HCT116 (cell line): ENCODE measurements at regions of chr13 and their contacts with region 1.

Region 1: DNA sequence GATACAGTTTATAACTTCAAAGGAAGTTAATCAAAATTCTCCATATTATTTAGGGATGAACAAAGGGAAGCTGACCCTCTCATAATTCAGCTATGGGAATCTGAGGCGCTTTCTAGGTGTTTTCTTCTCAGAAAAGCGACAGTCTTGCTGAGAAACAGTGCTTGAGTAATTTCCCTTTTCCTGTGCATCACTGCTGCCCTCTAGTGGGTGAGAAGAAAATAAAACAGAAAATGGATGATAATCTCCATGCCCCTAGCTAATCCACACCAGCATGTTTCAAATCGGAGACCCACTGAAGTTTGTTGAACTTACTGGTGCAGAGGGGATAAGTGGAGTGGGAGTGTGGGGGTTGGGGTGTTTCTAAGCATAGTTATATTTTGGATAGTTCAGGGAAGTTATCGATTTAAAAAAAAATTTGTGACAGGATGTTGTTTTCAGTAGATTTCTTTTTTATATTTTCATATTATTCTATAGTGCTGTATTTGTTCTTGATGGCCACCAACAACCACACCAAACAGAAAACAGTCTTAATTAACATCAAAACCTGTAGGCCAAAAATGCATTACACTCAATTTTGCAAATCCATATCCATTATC is 21.4 kb downstream of the LCP1 start:
- DNase-seq: peak; percentile 48
- ATAC-seq: peak; percentile 85
- H3K4me3 ChIP-seq: no peak overlapping the region
- H3K27ac ChIP-seq: no peak overlapping the region
- H3K4me1 ChIP-seq: no peaks in the 10 kb centered on the region
- H3K27me3 ChIP-seq: no peaks in the 10 kb centered on the region
- CTCF ChIP-seq: peak; percentile 61 to 82 (median 75)
- POLR2A ChIP-seq: no peak
- RAD21 ChIP-seq: peak; percentile 77

Region 2: DNA sequence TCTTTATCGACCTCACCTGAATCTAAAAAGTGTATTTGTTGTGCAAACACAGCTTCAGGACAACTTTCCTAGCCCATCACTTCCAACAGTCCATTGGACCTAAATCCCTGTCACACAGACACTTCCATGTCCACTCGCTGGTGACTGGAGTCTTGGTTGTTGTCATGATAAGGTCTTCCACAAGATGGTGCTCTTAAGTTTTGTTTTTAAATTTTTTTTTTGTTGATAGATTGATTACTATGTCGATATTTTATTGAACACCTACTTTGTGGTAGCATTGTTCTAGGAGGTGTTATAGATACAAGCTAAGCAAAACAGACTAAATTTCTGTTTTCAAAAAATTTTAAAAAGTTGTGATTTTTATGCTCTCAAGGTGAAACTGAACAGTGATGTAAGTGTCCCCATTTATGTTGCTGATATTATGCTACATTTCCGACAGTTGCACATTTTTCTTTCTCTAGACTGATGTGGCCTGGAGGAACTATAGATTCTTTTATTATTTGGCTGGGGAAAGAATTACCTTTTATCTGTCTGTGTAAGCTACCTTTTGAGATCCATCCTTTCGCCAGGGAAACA is 537.0 kb before region 1 on chr13:
- CTCF ChIA-PET with region 1: interaction called, 4 read pairs
- POLR2A ChIA-PET with region 1: no interaction called
- RAD21 ChIA-PET with region 1: no interaction called
- intact Hi-C with region 1: loop called (anchors 1 kb)
- DNase-seq: peak; percentile 33
- ATAC-seq: peak; percentile 76; the same call in 1 of the 2 replicates
- H3K4me3 ChIP-seq: no peak overlapping the region
- H3K27ac ChIP-seq: no peak overlapping the region
- H3K4me1 ChIP-seq: no peaks in the 10 kb centered on the region
- H3K27me3 ChIP-seq: peaks cover 90% of the 10 kb centered on the region
- CTCF ChIP-seq: peak; percentile 36 to 62 (median 44); a peak in 4 of 6 replicates
- POLR2A ChIP-seq: no peak
- RAD21 ChIP-seq: peak; percentile 58

Region 3: DNA sequence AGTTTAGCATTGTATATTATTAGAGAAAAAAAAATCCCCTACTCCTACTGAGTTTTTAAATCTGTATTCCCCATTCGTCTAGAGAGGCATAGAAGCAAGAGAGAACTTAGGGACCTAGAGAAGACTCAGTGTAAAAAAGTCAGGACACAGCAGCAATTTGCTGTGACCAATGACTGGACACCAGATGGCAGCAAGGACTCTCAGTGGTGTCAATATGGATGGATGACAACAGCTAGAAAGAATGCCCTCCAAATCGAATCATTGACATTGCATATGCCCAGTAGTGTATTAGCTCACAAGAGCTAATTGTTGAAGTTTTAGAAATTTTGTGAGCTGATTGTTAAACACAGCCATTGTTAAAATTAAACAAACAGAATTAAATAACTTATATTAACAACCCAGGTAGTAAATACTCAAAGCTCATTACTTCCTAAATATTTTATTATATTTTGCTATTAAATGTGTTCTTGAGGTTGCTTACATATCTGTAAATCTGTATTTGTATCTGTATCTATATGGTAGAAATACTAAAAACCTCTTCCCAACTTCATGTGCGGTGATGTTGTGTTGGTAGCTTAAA is 353.0 kb before region 1 on chr13:
- CTCF ChIA-PET with region 1: interaction called, 37 read pairs
- POLR2A ChIA-PET with region 1: interaction called, 5 read pairs
- RAD21 ChIA-PET with region 1: interaction called in 1 of 2 experiments, 3 read pairs
- intact Hi-C with region 1: loop called (anchors 2 kb)
- DNase-seq: peak; percentile 62
- ATAC-seq: peak; percentile 99
- H3K4me3 ChIP-seq: no peak overlapping the region
- H3K27ac ChIP-seq: no peak overlapping the region
- H3K4me1 ChIP-seq: no peaks in the 10 kb centered on the region
- H3K27me3 ChIP-seq: no peaks in the 10 kb centered on the region
- CTCF ChIP-seq: peak; percentile 66 to 77 (median 70)
- POLR2A ChIP-seq: no peak
- RAD21 ChIP-seq: peak; percentile 85

Region 4: GRCh38 chr13:46146899-46147298 is 13.7 kb before region 1 on chr13:
- CTCF ChIA-PET with region 1: interaction called, 35 read pairs
- POLR2A ChIA-PET with region 1: no interaction called
- RAD21 ChIA-PET with region 1: no interaction called
- intact Hi-C with region 1: no loop called
- DNase-seq: no peak
- ATAC-seq: peak; percentile 65; the same call in 1 of the 2 replicates
- H3K4me3 ChIP-seq: no peak overlapping the region
- H3K27ac ChIP-seq: no peak overlapping the region
- H3K4me1 ChIP-seq: no peaks in the 10 kb centered on the region
- H3K27me3 ChIP-seq: peaks cover 13% of the 10 kb centered on the region; the same call in 1 of the 2 replicates
- CTCF ChIP-seq: peak; percentile 19 to 37 (median 30); a peak in 5 of 6 replicates
- POLR2A ChIP-seq: no peak
- RAD21 ChIP-seq: peak; percentile 51

Region 5: GRCh38 chr13:46172531-46172991 is 12.0 kb after region 1 on chr13:
- CTCF ChIA-PET with region 1: interaction called, 12 read pairs
- POLR2A ChIA-PET with region 1: no interaction called
- RAD21 ChIA-PET with region 1: no interaction called
- intact Hi-C with region 1: no loop called
- DNase-seq: no peak
- ATAC-seq: no peak
- H3K4me3 ChIP-seq: no peak overlapping the region
- H3K27ac ChIP-seq: no peak overlapping the region
- H3K4me1 ChIP-seq: 0 out of 4 replicates have a peak, but pooled peaks cover 0 to 3% of the 10 kb centered on the region in 2 experiments
- H3K27me3 ChIP-seq: peaks cover 10% of the 10 kb centered on the region; the same call in 1 of the 2 replicates
- CTCF ChIP-seq: no peak
- POLR2A ChIP-seq: no peak
- RAD21 ChIP-seq: no peak

Region 6: DNA sequence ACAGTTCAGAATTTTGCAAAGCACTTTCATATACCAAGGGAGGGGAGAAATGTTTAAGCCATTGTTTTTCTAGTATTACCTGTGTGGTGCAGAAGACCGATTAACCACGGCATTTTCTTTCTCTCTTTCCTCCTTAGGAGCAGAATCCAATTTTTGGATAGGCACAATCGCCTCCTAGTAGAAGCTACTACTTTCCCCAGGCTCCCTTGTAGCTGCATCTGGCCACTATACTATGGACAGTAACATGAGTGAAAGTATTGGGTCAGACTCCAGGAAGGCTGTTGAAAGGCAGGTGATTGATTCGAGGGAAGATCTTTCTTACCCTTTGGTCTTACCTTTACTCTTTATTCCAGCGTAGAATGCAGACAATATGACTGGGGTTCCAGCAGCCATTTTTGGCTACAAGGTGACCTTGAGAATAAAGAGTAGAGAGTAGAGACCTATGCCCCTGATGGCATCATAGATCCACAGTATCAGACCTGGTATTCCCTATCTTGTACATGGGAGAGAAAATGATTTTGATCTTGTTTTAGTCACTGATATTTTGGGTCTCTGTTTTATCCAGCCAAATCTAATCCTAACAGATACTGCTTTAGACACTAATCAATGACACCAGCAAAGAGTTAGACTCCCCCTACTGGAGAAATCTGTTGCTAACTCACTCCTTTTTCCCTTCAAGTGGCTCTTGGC is 128.1 kb after region 1 on chr13:
- CTCF ChIA-PET with region 1: interaction called, 11 read pairs
- POLR2A ChIA-PET with region 1: no interaction called
- RAD21 ChIA-PET with region 1: no interaction called
- intact Hi-C with region 1: loop called (anchors 10 kb)
- DNase-seq: peak; percentile 39
- ATAC-seq: peak; percentile 92
- H3K4me3 ChIP-seq: no peak overlapping the region
- H3K27ac ChIP-seq: no peak overlapping the region
- H3K4me1 ChIP-seq: no peaks in the 10 kb centered on the region
- H3K27me3 ChIP-seq: no peaks in the 10 kb centered on the region
- CTCF ChIP-seq: peak; percentile 37 to 85 (median 82); a peak in 5 of 6 replicates
- POLR2A ChIP-seq: no peak
- RAD21 ChIP-seq: peak; percentile 53